ENCODE measurements at regions of chr7 and their contacts with region 1.

Region 1: GRCh38 chr7:29839302-29839701 is 33.0 kb downstream of the WIPF3 start:
- DNase-seq: peak; percentile 75 to 82
- ATAC-seq: peak; percentile 92 to 97 (median 93)
- H3K4me3 ChIP-seq: no peak overlapping the region
- H3K27ac ChIP-seq: peak overlapping the region; percentile 65
- H3K4me1 ChIP-seq: peaks cover 38% of the 10 kb centered on the region
- H3K27me3 ChIP-seq: no peaks in the 10 kb centered on the region
- CTCF ChIP-seq: no peak

Region 2: DNA sequence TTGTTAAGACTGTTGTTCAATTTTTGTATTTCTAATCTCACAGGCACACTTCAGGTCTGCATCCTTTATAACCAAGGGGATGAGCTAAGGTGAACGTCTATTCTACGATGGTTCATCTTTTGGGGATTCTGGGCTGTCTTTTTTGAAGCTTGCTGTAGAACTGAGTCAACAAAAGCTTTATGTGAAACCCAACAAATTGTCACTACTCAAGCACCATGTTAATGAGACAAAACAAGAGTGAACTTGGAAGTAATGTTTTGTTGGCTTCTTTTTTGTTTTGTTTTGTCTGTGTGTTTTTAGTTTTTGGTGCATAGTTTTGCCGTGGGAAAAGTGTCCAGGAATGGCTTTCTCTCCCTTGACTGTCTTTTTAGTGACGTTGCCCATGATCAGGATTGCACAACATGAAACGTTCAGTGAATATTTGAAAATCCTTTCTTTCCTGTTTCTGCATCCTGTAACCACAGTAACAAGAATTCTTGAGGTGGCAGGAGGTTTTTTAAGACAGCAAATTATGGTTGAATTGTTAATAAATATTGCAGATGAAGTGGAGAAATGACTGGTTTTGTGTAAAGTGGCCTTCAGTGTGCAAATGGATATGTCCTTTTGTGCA is 32.6 kb after region 1 on chr7:
- intact Hi-C with region 1: loop called in 1 of 2 experiments (anchors 5 kb)
- DNase-seq: no peak
- ATAC-seq: no peak
- H3K4me3 ChIP-seq: no peak overlapping the region
- H3K27ac ChIP-seq: peak overlapping the region; percentile 20
- H3K4me1 ChIP-seq: peaks cover 27% of the 10 kb centered on the region
- H3K27me3 ChIP-seq: no peaks in the 10 kb centered on the region
- CTCF ChIP-seq: no peak

Measured in psoas muscle (tissue), 8 donors.